MCF 10A (cell line): ENCODE measurements at regions of chr16 and their contacts with region 1.

Region 1: GRCh38 chr16:9008601-9009260 is 45.0 kb upstream of the USP7 start:
- DNase-seq: peak; percentile 68
- H3K4me3 Mint-ChIP-seq: peak overlapping the region; percentile 22
- H3K27ac Mint-ChIP-seq: no peak overlapping the region
- H3K4me1 Mint-ChIP-seq: no peaks in the 10 kb centered on the region
- H3K27me3 Mint-ChIP-seq: no peaks in the 10 kb centered on the region
- CTCF ChIP-seq: peak; percentile 81

Region 2: GRCh38 chr16:8868416-8869211 is 140.1 kb before region 1 on chr16 and contains the start of gene CARHSP1:
- CTCF ChIA-PET with region 1: interaction called, 14 read pairs
- POLR2A ChIA-PET with region 1: no interaction called
- intact Hi-C with region 1: no loop called
- DNase-seq: peak; percentile 90
- H3K4me3 Mint-ChIP-seq: peak within 1 kb of the TSS; percentile 87
- H3K27ac Mint-ChIP-seq: peak within 1 kb of the TSS; percentile 86
- H3K4me1 Mint-ChIP-seq: peaks cover 35% of the 10 kb centered on the region
- H3K27me3 Mint-ChIP-seq: no peaks in the 10 kb centered on the region
- CTCF ChIP-seq: no peak
- total RNA-seq, gene CARHSP1: 23.9 and 27.8 TPM in 2 replicates

Region 3: DNA sequence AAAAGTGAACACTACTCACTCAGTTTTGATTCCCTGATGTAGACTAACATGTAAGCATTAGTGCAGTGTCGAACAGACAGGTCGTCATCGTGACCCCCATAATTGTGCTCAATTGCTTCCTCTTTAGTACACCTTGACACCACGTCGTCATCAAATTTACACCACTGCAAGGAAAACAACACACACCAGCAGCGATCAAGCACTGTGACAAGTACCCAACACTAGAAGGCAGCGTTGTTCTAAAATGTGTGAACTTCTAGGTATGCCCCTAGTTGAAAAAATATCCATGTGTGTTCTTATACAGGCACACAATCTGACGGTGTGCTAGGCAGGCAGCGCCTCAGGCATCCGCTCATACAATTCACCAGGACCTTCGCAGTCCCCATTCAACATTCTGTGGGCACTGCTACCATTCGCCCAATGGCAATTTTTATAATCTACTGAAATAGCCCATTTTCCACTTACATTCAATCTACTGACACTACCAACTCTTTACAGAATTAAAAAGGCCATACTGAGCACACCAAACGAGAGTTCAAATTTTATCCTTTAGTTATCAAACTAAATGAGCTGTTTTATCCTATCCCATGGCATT is 103.5 kb before region 1 on chr16:
- CTCF ChIA-PET with region 1: interaction called, 20 read pairs
- POLR2A ChIA-PET with region 1: no interaction called
- intact Hi-C with region 1: loop called (anchors 1 kb)
- DNase-seq: peak; percentile 25
- H3K4me3 Mint-ChIP-seq: no peak overlapping the region
- H3K27ac Mint-ChIP-seq: no peak overlapping the region
- H3K4me1 Mint-ChIP-seq: no peaks in the 10 kb centered on the region
- H3K27me3 Mint-ChIP-seq: no peaks in the 10 kb centered on the region
- CTCF ChIP-seq: peak; percentile 34

Region 4: DNA sequence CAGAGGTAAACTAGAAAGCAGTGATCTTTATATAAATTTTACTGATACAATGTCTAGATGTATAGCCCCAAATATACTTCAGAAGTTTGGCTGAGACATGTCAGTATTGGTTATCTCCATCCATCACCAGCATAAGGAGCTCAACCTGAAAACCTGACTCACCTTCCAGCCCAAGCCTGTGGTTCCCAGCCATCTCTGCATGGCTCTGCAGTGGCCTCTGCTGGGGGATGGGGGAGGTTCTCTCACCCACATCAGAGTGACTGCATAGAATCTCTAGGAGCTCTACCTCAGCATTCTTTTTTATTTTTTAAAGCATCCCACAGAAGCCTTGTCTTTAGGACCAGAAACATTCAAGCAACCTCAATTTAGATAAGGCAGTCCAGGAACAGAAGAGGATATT is 72.3 kb before region 1 on chr16:
- CTCF ChIA-PET with region 1: interaction called, 42 read pairs
- POLR2A ChIA-PET with region 1: no interaction called
- intact Hi-C with region 1: loop called (anchors 1 kb)
- DNase-seq: peak; percentile 64
- H3K4me3 Mint-ChIP-seq: no peak overlapping the region
- H3K27ac Mint-ChIP-seq: no peak overlapping the region
- H3K4me1 Mint-ChIP-seq: peaks cover 28% of the 10 kb centered on the region
- H3K27me3 Mint-ChIP-seq: no peaks in the 10 kb centered on the region
- CTCF ChIP-seq: peak; percentile 44

Region 5: GRCh38 chr16:8963825-8964441 is 44.8 kb before region 1 on chr16 and contains the start of gene USP7:
- CTCF ChIA-PET with region 1: interaction called, 15 read pairs
- POLR2A ChIA-PET with region 1: interaction called, 3 read pairs
- intact Hi-C with region 1: loop called (anchors 2 kb)
- DNase-seq: peak; percentile 90
- H3K4me3 Mint-ChIP-seq: peak within 1 kb of the TSS; percentile 98
- H3K27ac Mint-ChIP-seq: peak within 1 kb of the TSS; percentile 81
- H3K4me1 Mint-ChIP-seq: peaks cover 32% of the 10 kb centered on the region
- H3K27me3 Mint-ChIP-seq: no peaks in the 10 kb centered on the region
- CTCF ChIP-seq: no peak
- total RNA-seq, gene USP7: 81.2 and 108 TPM in 2 replicates

Region 6: GRCh38 chr16:8998114-8998513 is 10.6 kb before region 1 on chr16:
- CTCF ChIA-PET with region 1: interaction called, 36 read pairs
- POLR2A ChIA-PET with region 1: interaction called, 3 read pairs
- intact Hi-C with region 1: no loop called
- DNase-seq: peak; percentile 55
- H3K4me3 Mint-ChIP-seq: no peak overlapping the region
- H3K27ac Mint-ChIP-seq: no peak overlapping the region
- H3K4me1 Mint-ChIP-seq: no peaks in the 10 kb centered on the region
- H3K27me3 Mint-ChIP-seq: no peaks in the 10 kb centered on the region
- CTCF ChIP-seq: no peak